ENCODE measurements at regions of chr19 and their contacts with region 1.

Region 1: DNA sequence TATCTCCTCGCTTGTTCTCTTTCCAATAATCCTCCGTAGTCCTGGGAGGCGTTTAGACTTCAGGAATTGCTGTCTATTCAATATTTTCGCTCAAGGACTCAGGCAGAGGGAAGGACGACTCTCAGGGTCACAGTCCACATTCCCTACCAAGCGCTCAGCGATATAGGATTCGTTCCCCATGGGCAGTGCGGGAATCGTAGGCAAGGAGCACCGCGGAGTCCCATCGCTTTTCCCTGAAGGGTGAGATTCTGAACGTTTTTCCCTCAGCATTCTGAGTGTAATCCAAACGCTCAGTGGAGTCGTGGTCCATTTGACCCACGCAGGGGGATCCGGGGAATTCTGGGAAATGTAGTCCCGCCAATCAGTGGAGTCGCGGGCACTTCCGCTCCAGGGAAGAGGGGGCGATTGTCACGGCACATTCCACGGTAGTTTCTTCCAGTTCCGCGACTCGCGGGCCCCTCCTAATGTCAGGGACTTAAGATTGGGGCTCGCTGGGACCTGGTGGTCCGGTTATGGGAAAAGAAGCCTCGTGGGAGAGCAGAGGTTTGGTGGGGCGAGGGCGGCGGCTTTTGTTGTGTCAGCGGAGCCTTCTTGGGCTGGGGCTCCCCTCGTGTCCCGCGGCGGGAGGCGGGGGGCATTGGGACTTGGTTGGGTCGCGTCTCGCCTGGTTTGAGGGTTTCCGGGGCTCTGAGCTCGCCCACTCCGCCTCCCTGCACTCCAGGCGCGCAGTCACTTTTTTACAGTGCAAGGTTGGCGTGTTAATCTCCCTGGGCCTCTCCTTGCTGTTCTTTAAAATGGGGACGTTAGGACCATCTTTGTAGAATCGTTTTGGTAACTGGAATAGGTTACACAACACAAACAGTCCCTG is at the start of gene ZNF234:
- DNase-seq: peak; percentile 94
- total RNA-seq, gene ZNF234: 9.6 TPM

Region 2: GRCh38 chr19:44164673-44165512 is 23.5 kb after region 1 on chr19 and contains the start of gene ZNF226:
- intact Hi-C with region 1: loop called (anchors 2 kb)
- DNase-seq: peak; percentile 95
- total RNA-seq, gene ZNF226: 25.6 TPM

Region 3: GRCh38 chr19:44212250-44212865 is 70.9 kb after region 1 on chr19 and contains the start of gene ZNF227:
- intact Hi-C with region 1: loop called (anchors 1 kb)
- DNase-seq: peak; percentile 95
- total RNA-seq, gene ZNF227: 15.4 TPM